ENCODE measurements at regions of chr3 and their contacts with region 1.

Region 1: DNA sequence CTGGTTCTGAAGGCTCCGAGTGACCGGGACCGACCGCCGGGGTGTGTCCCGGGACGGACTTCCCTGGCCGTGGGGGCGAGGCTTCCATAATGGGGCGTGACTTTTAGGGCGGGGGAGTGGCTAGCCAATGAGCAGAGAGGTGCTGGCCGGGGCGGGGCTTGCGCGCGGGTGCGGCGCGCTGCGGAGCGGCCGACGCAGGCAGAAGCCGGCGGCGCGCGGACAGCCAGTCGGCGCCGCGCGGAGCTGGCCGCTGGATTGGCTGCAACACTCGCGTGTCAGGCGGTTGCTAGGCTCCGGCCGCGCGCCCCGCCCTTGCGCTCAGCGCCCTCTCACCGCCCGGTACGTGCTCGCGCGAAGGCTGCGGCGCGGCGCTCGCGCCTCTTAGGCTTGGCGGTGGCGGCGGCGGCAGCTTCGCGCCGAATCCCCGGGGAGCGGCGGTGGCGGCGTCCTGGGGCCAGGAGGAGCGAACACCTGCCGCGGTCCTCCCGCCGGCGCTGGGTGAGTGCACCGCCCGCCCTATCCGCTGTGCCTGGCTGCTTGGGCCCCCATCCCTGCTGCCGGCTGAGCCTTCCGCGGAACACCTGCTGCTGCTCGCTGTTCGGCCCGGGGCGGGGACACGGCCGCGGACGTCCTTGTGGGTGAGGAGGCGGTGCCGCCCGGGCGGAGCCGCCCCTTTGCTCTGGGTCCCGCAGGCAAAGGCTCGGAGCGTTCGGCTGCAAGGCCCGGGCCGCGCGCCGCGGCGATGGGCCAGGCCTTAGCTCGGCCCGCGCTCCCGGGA is at the start of gene DAG1:
- DNase-seq: peak; percentile 99
- total RNA-seq, gene DAG1: 90.8 to 92.8 TPM

Region 2: GRCh38 chr3:49165771-49166751 is 304.1 kb before region 1 on chr3 and contains the start of gene CCDC71:
- intact Hi-C with region 1: loop called in 1 of 2 experiments (anchors 10 kb)
- DNase-seq: peak; percentile 95
- total RNA-seq, gene CCDC71: 14.1 to 14.3 TPM

Region 3: DNA sequence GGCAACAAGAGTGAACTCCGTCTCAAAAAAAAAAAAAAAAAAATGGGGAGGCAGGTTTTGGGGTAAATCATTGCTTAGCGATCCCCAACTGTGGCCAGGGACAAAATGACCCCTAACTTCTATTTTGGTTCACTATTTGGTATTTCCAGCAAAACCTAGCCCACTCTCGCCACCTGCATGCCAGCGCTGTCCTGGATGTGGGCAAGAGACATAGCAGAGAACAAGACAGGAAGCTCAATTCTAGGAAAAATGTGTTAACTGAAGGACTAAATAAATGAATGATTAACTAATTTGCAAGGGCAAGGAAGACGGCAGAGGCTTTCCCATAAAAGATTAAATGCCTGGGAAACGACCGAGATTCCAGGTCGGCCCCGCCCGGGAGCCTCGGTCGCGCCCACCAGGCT is 41.4 kb before region 1 on chr3:
- intact Hi-C with region 1: loop called in 1 of 2 experiments (anchors 1 kb)
- DNase-seq: no peak

Region 4: DNA sequence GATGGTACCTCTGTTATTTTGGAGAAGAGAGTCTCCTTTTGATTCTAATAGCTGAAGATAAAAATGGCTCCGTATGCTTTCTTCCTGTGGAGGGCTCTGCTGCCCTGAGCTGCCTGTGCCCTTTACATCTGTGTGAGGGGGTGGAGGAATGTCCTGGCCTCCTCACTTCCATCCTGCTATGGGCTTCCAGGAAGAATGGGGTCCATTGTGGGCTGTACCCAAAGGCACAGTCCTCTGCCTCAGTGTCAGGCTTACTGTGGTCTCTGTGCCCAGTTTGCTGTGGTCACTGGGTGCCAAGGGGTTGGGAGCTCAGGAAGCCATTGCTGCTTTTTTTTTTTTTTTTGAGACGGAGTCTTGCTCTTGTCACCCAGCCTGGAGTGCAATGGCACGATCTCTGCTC is 14.3 kb after region 1 on chr3:
- intact Hi-C with region 1: loop called in 1 of 2 experiments (anchors 1 kb)
- DNase-seq: no peak